Transverse colon (tissue), 4 donors: ENCODE measurements at regions of chr5 and their contacts with region 1.

Region 1: GRCh38 chr5:142769741-142770631 is at the start of gene ARHGAP26:
- DNase-seq: peak; percentile 98
- H3K4me3 ChIP-seq: peak within 1 kb of the TSS; percentile 57 to 86 (median 84)
- H3K27ac ChIP-seq: peak within 1 kb of the TSS; percentile 92 to 96 (median 94)
- H3K4me1 ChIP-seq: peaks cover 0 to 51% (median 35%) of the 10 kb centered on the region in 4 donors
- H3K27me3 ChIP-seq: no peaks in the 10 kb centered on the region
- CTCF ChIP-seq: peak in 2 of 5 experiments; percentile 39 to 57
- EP300 ChIP-seq: no peak
- POLR2A ChIP-seq: peak; percentile 99
- total RNA-seq, gene ARHGAP26: 61.0 to 76.7 (median 61.2) TPM

Region 2: DNA sequence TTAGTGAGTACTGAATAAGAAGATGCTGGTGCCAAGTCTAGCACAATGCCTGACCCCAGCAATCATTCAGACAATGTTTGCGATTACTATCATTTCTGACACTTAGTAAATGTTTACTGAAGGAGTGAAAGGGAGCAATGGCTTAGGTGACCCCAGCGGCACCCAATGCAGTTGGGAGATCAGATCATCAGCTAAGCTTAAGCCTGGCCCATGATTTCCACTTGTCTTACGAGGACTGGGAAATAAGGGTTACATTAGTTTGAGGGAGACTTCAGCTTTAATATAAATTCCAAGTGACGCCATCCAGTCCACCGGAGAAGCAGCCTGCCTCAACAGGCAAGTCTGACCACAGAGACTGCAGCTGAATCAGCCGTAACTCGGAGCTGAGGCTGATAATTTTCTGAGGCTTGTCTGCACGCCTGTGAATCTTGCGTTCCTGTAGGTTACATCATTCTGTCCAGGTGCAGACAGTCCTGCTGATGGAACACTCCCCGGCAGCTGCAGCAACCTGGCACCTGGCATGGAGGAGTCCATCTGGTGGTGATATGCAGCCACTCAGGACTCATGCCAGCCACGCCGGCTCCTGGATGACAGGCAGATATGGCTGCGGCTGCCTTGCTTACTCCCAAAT is 49.2 kb before region 1 on chr5:
- in situ Hi-C with region 1: no loop called
- intact Hi-C with region 1: loop called (anchors 5 kb)
- DNase-seq: peak; percentile 58
- H3K4me3 ChIP-seq: no peak overlapping the region
- H3K27ac ChIP-seq: no peak overlapping the region
- H3K4me1 ChIP-seq: peaks cover 0 to 12% (median under 1%) of the 10 kb centered on the region in 4 donors
- H3K27me3 ChIP-seq: no peaks in the 10 kb centered on the region
- CTCF ChIP-seq: peak in 1 of 5 experiments; percentile 35
- EP300 ChIP-seq: no peak
- POLR2A ChIP-seq: no peak

Region 3: GRCh38 chr5:142865414-142866045 is 95.5 kb after region 1 on chr5:
- in situ Hi-C with region 1: loop called in 2 of 4 experiments (anchors 10 kb)
- intact Hi-C with region 1: loop called (anchors 1 kb)
- DNase-seq: no peak
- H3K4me3 ChIP-seq: no peak overlapping the region
- H3K27ac ChIP-seq: no peak overlapping the region
- H3K4me1 ChIP-seq: peaks cover 31 to 82% (median 48%) of the 10 kb centered on the region in 4 donors
- H3K27me3 ChIP-seq: no peaks in the 10 kb centered on the region
- CTCF ChIP-seq: no peak
- EP300 ChIP-seq: no peak
- POLR2A ChIP-seq: no peak

Region 4: DNA sequence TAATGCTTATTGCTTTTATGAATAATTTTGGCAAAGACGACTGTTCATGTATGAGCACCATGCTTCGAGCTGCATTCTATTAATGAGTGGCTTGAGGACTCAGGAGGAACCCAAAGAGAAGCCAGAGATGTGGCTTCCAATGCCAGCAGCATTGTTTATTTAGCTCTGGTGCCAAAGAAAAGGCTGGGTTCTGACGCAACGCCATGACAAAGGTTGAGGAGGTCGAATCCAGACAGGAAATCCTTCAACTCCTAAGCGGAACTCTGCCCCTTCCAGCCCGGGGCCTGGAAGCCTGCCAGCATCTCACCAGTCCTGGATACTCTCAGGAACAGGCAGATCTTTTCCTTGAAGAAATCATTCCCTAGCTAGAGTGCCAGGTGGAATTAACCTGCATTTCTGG is 104.6 kb after region 1 on chr5:
- in situ Hi-C with region 1: loop called in 2 of 4 experiments (anchors 10 kb)
- intact Hi-C with region 1: no loop called
- DNase-seq: peak; percentile 95
- H3K4me3 ChIP-seq: no peak overlapping the region
- H3K27ac ChIP-seq: peak overlapping the region; percentile 79 to 82 (median 80)
- H3K4me1 ChIP-seq: peaks cover 30 to 62% (median 58%) of the 10 kb centered on the region in 4 donors
- H3K27me3 ChIP-seq: no peaks in the 10 kb centered on the region
- CTCF ChIP-seq: no peak
- EP300 ChIP-seq: no peak
- POLR2A ChIP-seq: no peak

Region 5: GRCh38 chr5:143957455-143957854 is 1187.5 kb after region 1 on chr5:
- in situ Hi-C with region 1: no loop called
- intact Hi-C with region 1: no loop called
- DNase-seq: no peak
- H3K4me3 ChIP-seq: no peak overlapping the region
- H3K27ac ChIP-seq: no peak overlapping the region
- H3K4me1 ChIP-seq: no peaks in the 10 kb centered on the region
- H3K27me3 ChIP-seq: no peaks in the 10 kb centered on the region
- CTCF ChIP-seq: peak in 2 of 5 experiments; percentile 7 to 9
- EP300 ChIP-seq: no peak
- POLR2A ChIP-seq: no peak